MCF 10A (cell line): ENCODE measurements at regions of chr20 and their contacts with region 1.

Region 1: GRCh38 chr20:44210422-44211176 is at the start of gene OSER1:
- DNase-seq: peak; percentile 99
- H3K4me3 Mint-ChIP-seq: peak within 1 kb of the TSS; percentile 100
- H3K27ac Mint-ChIP-seq: peak within 1 kb of the TSS; percentile 100
- H3K4me1 Mint-ChIP-seq: peaks cover 39% of the 10 kb centered on the region
- H3K27me3 Mint-ChIP-seq: no peaks in the 10 kb centered on the region
- CTCF ChIP-seq: no peak
- total RNA-seq, gene OSER1: 45.4 and 50.8 TPM in 2 replicates

Region 2: GRCh38 chr20:44028868-44029847 is 181.4 kb before region 1 on chr20:
- CTCF ChIA-PET with region 1: no interaction called
- POLR2A ChIA-PET with region 1: no interaction called
- intact Hi-C with region 1: no loop called
- DNase-seq: no peak
- H3K4me3 Mint-ChIP-seq: no peak overlapping the region
- H3K27ac Mint-ChIP-seq: no peak overlapping the region
- H3K4me1 Mint-ChIP-seq: peaks cover 6% of the 10 kb centered on the region
- H3K27me3 Mint-ChIP-seq: peaks cover 19% of the 10 kb centered on the region
- CTCF ChIP-seq: no peak

Region 3: GRCh38 chr20:44142413-44142812 is 68.2 kb before region 1 on chr20:
- CTCF ChIA-PET with region 1: no interaction called
- POLR2A ChIA-PET with region 1: no interaction called
- intact Hi-C with region 1: no loop called
- DNase-seq: no peak
- H3K4me3 Mint-ChIP-seq: no peak overlapping the region
- H3K27ac Mint-ChIP-seq: no peak overlapping the region
- H3K4me1 Mint-ChIP-seq: no peaks in the 10 kb centered on the region
- H3K27me3 Mint-ChIP-seq: no peaks in the 10 kb centered on the region
- CTCF ChIP-seq: no peak

Region 4: DNA sequence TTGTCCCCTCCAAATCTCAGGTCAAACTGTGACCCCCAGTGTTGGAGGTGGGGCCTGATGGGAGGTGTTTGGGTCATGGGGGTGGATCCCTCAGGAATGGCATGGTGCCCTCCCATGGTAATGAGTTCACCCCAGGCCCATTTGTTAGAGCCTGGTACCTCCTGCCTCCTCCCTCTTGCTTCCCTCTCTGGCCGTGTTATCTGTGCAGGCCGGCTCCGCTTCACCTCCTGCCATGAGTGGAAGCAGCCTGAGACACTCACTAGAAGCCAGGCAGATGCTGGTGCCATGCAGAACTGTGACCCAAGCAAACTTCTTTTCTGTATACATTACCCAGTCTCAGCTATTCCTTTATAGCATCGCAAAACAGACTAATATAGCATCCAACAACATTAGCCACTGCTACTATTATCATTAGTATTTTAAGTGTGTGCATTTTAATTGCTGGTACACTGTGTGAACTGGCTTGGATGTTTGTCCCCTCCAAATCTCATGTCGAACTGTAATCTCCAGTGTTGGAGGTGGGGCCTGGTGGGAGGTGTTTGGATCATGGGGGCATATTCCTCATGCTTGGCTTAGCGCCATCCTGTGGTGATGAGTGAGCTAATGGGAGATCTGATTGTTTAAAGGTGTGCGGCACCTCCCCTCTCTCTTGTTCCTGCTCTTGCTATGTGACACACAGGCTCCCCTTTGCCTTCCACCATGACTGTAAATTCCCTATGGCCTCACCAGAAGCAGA is 12.2 kb after region 1 on chr20:
- CTCF ChIA-PET with region 1: interaction called, 13 read pairs
- POLR2A ChIA-PET with region 1: interaction called, 6 read pairs
- intact Hi-C with region 1: no loop called
- DNase-seq: no peak
- H3K4me3 Mint-ChIP-seq: no peak overlapping the region
- H3K27ac Mint-ChIP-seq: no peak overlapping the region
- H3K4me1 Mint-ChIP-seq: no peaks in the 10 kb centered on the region
- H3K27me3 Mint-ChIP-seq: no peaks in the 10 kb centered on the region
- CTCF ChIP-seq: no peak

Region 5: DNA sequence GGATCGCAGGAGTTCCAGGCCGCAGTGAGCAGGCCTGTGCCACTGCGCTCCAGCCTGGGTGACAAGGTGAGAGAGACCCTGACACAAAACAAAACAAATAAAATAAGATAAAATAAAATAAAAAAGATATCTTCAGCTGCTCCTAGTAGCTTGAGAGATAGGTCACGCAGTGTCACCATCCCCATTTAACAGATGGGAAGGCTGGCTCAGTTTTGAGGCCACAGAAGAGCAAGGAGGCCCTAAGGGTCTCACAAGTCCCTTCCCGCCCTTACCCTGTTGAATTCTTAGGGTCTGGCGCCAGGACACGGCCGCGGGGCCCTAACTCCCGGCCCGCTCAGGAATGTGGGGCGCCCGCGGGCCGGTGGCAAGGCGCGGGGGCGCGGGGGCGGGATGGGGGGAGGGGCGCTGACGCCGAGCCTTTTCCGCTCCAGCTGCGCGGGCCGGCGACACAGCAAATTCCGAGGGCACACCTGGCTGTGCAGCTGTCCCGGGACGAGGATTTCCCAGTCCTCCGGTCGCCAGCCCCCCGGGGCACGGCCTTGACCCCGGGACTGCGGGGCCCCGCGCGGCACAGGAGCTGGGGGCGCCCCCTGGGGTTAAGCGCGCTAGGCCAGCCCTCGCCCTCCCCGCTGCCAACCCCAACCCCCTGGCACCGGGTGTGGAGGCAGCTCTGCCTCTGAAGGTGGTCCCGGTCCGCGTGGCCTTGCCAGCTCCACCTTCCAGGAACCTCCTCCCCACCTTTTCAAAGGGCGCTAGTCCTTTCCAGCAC is 116.0 kb after region 1 on chr20:
- CTCF ChIA-PET with region 1: interaction called, 73 read pairs
- POLR2A ChIA-PET with region 1: interaction called, 3 read pairs
- intact Hi-C with region 1: no loop called
- DNase-seq: no peak
- H3K4me3 Mint-ChIP-seq: peak overlapping the region; percentile 23
- H3K27ac Mint-ChIP-seq: no peak overlapping the region
- H3K4me1 Mint-ChIP-seq: no peaks in the 10 kb centered on the region
- H3K27me3 Mint-ChIP-seq: no peaks in the 10 kb centered on the region
- CTCF ChIP-seq: no peak

Region 6: GRCh38 chr20:44467289-44467883 is 256.8 kb after region 1 on chr20:
- CTCF ChIA-PET with region 1: interaction called, 347 read pairs
- POLR2A ChIA-PET with region 1: interaction called, 29 read pairs
- intact Hi-C with region 1: no loop called
- DNase-seq: peak; percentile 97
- H3K4me3 Mint-ChIP-seq: peak overlapping the region; percentile 26
- H3K27ac Mint-ChIP-seq: peak overlapping the region; percentile 58
- H3K4me1 Mint-ChIP-seq: peaks cover 40% of the 10 kb centered on the region
- H3K27me3 Mint-ChIP-seq: no peaks in the 10 kb centered on the region
- CTCF ChIP-seq: no peak